CD8-positive, alpha-beta T cell (primary cell): ENCODE measurements at regions of chr4 and their contacts with region 1.

Region 1: DNA sequence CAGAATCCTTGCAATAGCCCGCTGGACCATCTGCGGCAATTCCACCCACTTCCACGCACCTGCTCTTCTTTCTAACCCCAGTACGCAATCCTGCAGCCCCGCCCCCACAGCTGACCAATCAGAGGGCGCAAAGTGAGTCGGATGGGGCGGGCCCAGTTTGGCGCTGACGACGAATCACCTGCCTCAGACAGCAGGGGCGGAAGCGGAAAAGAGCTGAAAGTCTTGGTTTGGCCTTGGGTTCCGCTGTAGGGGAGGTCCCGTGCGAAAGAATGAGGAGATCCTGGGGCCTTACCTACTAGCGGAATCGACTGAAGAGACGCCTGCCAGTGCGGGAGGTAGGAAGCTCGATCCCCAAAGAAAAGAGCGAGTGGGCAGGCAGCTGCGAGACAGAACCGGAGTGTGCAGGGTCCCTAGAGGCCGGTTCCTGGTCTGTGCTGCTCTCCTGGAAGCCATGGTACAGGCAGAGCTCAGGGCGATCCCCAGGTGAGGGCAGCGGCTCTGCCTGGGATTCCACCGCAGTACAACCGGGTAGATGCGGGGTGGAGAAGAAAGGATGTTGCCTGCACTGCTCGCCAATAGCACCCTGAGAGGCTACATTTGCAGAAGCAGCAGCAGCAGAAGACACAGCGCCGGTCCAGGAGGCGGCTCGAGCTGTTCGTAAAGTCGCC is at the start of gene TMEM184C:
- DNase-seq: peak; percentile 98 to 99 (median 99)
- ATAC-seq: peak; percentile 96
- H3K4me3 ChIP-seq: peak within 1 kb of the TSS; percentile 62 to 74
- H3K4me3 Mint-ChIP-seq: peak within 1 kb of the TSS; percentile 91
- H3K27ac ChIP-seq: peak within 1 kb of the TSS; percentile 81
- H3K27ac Mint-ChIP-seq: peak within 1 kb of the TSS; percentile 95
- H3K4me1 ChIP-seq: peaks cover 40% of the 10 kb centered on the region
- H3K4me1 Mint-ChIP-seq: peaks cover 46% of the 10 kb centered on the region
- H3K27me3 ChIP-seq: no peaks in the 10 kb centered on the region
- H3K27me3 Mint-ChIP-seq: no peaks in the 10 kb centered on the region
- CTCF ChIP-seq: no peak
- total RNA-seq, gene TMEM184C: 10.9 to 11.7 TPM

Region 2: DNA sequence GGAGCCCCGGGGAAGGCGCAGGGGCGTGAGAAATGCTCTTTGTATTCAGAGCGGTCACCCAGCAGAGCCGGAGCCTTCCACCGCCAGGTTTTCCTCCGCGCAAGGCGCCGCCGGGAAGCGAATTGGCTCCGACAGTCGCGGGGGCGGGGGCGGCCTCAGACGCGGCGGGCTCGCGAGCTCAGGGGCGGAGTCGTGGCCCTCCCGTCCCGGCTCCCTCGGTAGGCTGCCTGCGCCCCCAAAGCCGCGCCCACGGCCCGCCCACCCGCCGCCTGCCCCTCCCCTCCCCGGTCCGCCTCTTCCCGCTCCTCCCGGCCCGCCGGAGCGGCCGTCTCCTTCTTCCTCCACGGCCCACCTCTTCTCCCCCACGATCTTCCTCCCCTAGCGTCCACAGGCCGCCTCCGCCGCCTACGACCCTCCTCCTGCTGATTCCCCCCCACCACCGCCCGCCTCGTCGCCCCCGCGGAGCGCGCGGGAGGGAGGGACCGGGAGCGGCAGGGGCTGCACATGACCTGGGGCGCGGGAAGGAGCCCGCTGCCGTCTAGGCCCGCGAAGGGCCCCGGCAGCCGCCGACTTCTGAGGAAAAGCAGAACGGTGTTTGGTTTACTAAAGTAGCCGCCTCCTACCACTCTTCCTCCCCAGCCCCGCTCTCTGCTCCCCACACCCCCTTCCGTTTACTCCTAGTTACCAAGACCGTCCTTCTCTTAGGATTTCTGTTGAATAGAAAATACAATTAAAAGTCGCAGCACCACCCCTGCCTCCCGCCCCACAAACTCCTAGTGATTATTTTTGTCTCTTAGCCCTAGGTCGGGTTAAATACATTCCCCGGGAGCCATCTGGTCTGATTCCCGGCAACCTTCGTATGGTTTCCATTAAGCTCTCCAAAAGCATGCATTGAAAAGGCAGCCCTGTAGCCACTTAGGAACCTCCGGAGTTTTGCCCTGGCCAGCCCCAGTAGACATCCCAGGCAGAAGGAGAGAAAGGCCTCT is 1884.1 kb before region 1 on chr4:
- CTCF ChIA-PET with region 1: no interaction called
- POLR2A ChIA-PET with region 1: no interaction called
- intact Hi-C with region 1: loop called in 1 of 2 experiments (anchors 10 kb)
- DNase-seq: peak; percentile 58 to 92 (median 83)
- ATAC-seq: peak; percentile 98
- H3K4me3 ChIP-seq: peak overlapping the region; percentile 71 to 73
- H3K4me3 Mint-ChIP-seq: peak overlapping the region; percentile 80
- H3K27ac ChIP-seq: peak overlapping the region in 1 of 2 experiments; percentile 45
- H3K27ac Mint-ChIP-seq: peak overlapping the region; percentile 29
- H3K4me1 ChIP-seq: peaks cover 3% of the 10 kb centered on the region
- H3K4me1 Mint-ChIP-seq: peaks cover 9% of the 10 kb centered on the region
- H3K27me3 ChIP-seq: no peaks in the 10 kb centered on the region
- H3K27me3 Mint-ChIP-seq: peaks cover 4% of the 10 kb centered on the region
- CTCF ChIP-seq: no peak

Region 3: DNA sequence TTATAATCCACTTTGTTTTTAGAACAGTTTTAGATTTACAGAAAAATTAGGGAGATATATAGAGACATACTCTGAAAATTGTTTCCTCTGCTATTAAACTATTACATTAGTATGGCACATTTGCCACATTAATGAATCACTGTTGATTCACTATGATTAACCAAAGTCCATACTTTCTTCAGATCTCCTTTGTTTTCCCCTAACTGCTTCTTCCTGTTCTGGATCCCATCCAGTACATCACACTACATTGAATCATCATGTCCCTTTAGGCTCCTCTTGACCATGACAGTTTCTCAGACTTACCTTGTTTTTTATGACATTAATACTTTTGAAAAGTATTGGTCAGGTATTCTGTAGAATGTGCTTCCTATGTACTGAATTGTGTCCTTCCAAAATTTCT is 245.6 kb before region 1 on chr4:
- CTCF ChIA-PET with region 1: no interaction called
- POLR2A ChIA-PET with region 1: no interaction called
- intact Hi-C with region 1: no loop called
- DNase-seq: no peak
- ATAC-seq: no peak
- H3K4me3 ChIP-seq: no peak overlapping the region
- H3K4me3 Mint-ChIP-seq: no peak overlapping the region
- H3K27ac ChIP-seq: no peak overlapping the region
- H3K27ac Mint-ChIP-seq: no peak overlapping the region
- H3K4me1 ChIP-seq: no peaks in the 10 kb centered on the region
- H3K4me1 Mint-ChIP-seq: no peaks in the 10 kb centered on the region
- H3K27me3 ChIP-seq: no peaks in the 10 kb centered on the region
- H3K27me3 Mint-ChIP-seq: peaks cover 2% of the 10 kb centered on the region
- CTCF ChIP-seq: no peak

Region 4: GRCh38 chr4:147578051-147578476 is 39.2 kb before region 1 on chr4:
- CTCF ChIA-PET with region 1: no interaction called
- POLR2A ChIA-PET with region 1: no interaction called
- intact Hi-C with region 1: no loop called
- DNase-seq: no peak
- ATAC-seq: no peak
- H3K4me3 ChIP-seq: no peak overlapping the region
- H3K4me3 Mint-ChIP-seq: no peak overlapping the region
- H3K27ac ChIP-seq: no peak overlapping the region
- H3K27ac Mint-ChIP-seq: no peak overlapping the region
- H3K4me1 ChIP-seq: no peaks in the 10 kb centered on the region
- H3K4me1 Mint-ChIP-seq: no peaks in the 10 kb centered on the region
- H3K27me3 ChIP-seq: no peaks in the 10 kb centered on the region
- H3K27me3 Mint-ChIP-seq: peaks cover 6% of the 10 kb centered on the region
- CTCF ChIP-seq: no peak

Region 5: GRCh38 chr4:147633113-147633512 is 15.8 kb after region 1 on chr4:
- CTCF ChIA-PET with region 1: interaction called, 3 read pairs
- POLR2A ChIA-PET with region 1: interaction called, 10 read pairs
- intact Hi-C with region 1: loop called in 1 of 2 experiments (anchors 2 kb)
- DNase-seq: no peak
- ATAC-seq: no peak
- H3K4me3 ChIP-seq: no peak overlapping the region
- H3K4me3 Mint-ChIP-seq: no peak overlapping the region
- H3K27ac ChIP-seq: no peak overlapping the region
- H3K27ac Mint-ChIP-seq: no peak overlapping the region
- H3K4me1 ChIP-seq: no peaks in the 10 kb centered on the region
- H3K4me1 Mint-ChIP-seq: peaks cover 7% of the 10 kb centered on the region
- H3K27me3 ChIP-seq: no peaks in the 10 kb centered on the region
- H3K27me3 Mint-ChIP-seq: no peaks in the 10 kb centered on the region
- CTCF ChIP-seq: no peak

Region 6: GRCh38 chr4:147658501-147658900 is 41.2 kb after region 1 on chr4:
- CTCF ChIA-PET with region 1: no interaction called
- POLR2A ChIA-PET with region 1: no interaction called
- intact Hi-C with region 1: no loop called
- DNase-seq: no peak
- ATAC-seq: no peak
- H3K4me3 ChIP-seq: no peak overlapping the region
- H3K4me3 Mint-ChIP-seq: no peak overlapping the region
- H3K27ac ChIP-seq: no peak overlapping the region
- H3K27ac Mint-ChIP-seq: no peak overlapping the region
- H3K4me1 ChIP-seq: no peaks in the 10 kb centered on the region
- H3K4me1 Mint-ChIP-seq: no peaks in the 10 kb centered on the region
- H3K27me3 ChIP-seq: no peaks in the 10 kb centered on the region
- H3K27me3 Mint-ChIP-seq: no peaks in the 10 kb centered on the region
- CTCF ChIP-seq: no peak

Region 7: GRCh38 chr4:147731580-147732517 is 114.5 kb after region 1 on chr4 and contains the start of gene ARHGAP10:
- CTCF ChIA-PET with region 1: no interaction called
- POLR2A ChIA-PET with region 1: interaction called, 16 read pairs
- intact Hi-C with region 1: loop called (anchors 2 kb)
- DNase-seq: peak; percentile 18 to 79 (median 72)
- ATAC-seq: peak; percentile 66
- H3K4me3 ChIP-seq: peak within 1 kb of the TSS; percentile 91
- H3K4me3 Mint-ChIP-seq: peak within 1 kb of the TSS; percentile 90
- H3K27ac ChIP-seq: peak within 1 kb of the TSS; percentile 55 to 60
- H3K27ac Mint-ChIP-seq: peak within 1 kb of the TSS; percentile 83
- H3K4me1 ChIP-seq: peaks cover 18% of the 10 kb centered on the region
- H3K4me1 Mint-ChIP-seq: peaks cover 32% of the 10 kb centered on the region
- H3K27me3 ChIP-seq: no peaks in the 10 kb centered on the region
- H3K27me3 Mint-ChIP-seq: peaks cover 2% of the 10 kb centered on the region
- CTCF ChIP-seq: no peak
- total RNA-seq, gene ARHGAP10: 7.2 to 7.4 TPM